Endothelial cell of umbilical vein (primary cell): ENCODE measurements at regions of chr7 and their contacts with region 1.

Region 1: DNA sequence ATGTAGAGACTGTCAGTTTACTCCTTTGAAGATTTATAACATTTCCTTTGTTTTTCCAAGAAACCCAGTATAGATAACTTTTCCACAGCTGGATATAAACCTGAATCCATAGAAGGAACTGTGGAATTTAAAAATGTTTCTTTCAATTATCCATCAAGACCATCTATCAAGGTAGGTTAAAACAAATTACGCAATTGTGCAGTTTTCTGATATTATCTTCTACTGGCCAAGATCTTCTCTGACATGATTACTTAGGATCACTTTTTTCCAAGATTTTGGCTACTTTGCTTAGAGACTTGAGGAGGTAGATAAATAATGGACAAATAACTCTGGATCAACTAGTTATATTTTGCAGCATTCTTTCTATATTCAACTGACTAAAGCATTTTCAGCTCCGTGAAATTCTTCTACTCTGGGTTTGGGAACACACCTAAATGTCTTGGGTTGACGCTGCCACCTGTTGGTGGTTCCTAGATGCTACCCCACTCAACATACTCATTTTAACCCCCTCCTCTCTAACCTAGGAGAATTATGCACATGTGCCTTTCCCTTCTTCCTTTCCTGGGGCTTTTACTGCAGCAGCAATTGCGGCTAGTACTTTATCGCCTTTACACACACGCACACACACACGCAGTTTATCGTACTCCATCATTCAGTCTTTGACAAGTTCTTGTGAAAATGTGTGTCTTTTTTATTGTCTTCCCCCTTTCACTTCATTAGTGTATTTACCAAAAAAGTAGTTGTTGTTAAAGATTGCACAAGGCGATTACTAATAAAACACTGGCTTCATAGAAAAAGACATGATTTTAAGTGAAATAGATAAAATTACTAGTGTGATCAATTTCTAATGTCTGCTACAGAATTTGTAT is 32.7 kb downstream of the ABCB5 start:
- DNase-seq: peak; percentile 64
- H3K4me3 ChIP-seq: no peak overlapping the region
- H3K27ac ChIP-seq: no peak overlapping the region
- H3K4me1 ChIP-seq: no peaks in the 10 kb centered on the region
- H3K27me3 ChIP-seq: peaks cover 0 to 4% of the 10 kb centered on the region in 2 experiments
- CTCF ChIP-seq: peak; percentile 54 to 64
- POLR2A ChIP-seq: no peak

Region 2: GRCh38 chr7:19708397-19709248 is 939.5 kb before region 1 on chr7 and contains the start of gene POLR1F:
- CTCF ChIA-PET with region 1: interaction called, 341 read pairs
- POLR2A ChIA-PET with region 1: no interaction called
- dilution Hi-C with region 1: no loop called
- intact Hi-C with region 1: loop called (anchors 1 kb)
- DNase-seq: peak; percentile 97
- H3K4me3 ChIP-seq: peak within 1 kb of the TSS; percentile 45 to 83 (median 77)
- H3K27ac ChIP-seq: peak within 1 kb of the TSS; percentile 44
- H3K4me1 ChIP-seq: peaks cover 19% of the 10 kb centered on the region
- H3K27me3 ChIP-seq: peaks cover 0 to 12% of the 10 kb centered on the region in 2 experiments
- CTCF ChIP-seq: peak; percentile 88 to 92
- POLR2A ChIP-seq: peak; percentile 92
- total RNA-seq, gene POLR1F: 21.0 and 27.0 TPM in 2 replicates

Region 3: DNA sequence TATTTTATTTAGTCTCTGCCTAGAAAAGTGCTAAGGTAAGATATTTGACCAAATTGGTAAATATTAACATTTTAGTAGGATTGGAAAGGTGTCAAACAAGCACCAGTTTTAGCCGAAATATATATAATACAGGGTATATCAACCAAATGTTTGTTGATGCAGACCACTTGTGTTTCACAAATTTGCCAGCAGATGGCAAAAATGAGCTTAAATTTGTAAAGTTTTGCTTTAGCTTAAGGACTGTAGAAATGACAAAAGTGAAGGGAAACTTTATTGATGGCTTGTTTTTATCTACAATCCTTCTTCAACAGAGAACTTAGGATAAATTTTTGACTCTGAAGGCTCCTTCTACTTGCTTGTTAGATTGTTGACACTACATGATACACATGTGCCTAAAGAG is 934.5 kb before region 1 on chr7:
- CTCF ChIA-PET with region 1: interaction called, 341 read pairs
- POLR2A ChIA-PET with region 1: no interaction called
- dilution Hi-C with region 1: no loop called
- intact Hi-C with region 1: loop called (anchors 1 kb)
- DNase-seq: peak; percentile 62
- H3K4me3 ChIP-seq: no peak overlapping the region
- H3K27ac ChIP-seq: no peak overlapping the region
- H3K4me1 ChIP-seq: no peaks in the 10 kb centered on the region
- H3K27me3 ChIP-seq: peaks cover 10 to 29% of the 10 kb centered on the region in 2 experiments
- CTCF ChIP-seq: peak; percentile 20 to 39
- POLR2A ChIP-seq: no peak

Region 4: GRCh38 chr7:19754521-19755116 is 893.5 kb before region 1 on chr7:
- CTCF ChIA-PET with region 1: interaction called, 26 read pairs
- POLR2A ChIA-PET with region 1: no interaction called
- dilution Hi-C with region 1: no loop called
- intact Hi-C with region 1: no loop called
- DNase-seq: peak; percentile 75
- H3K4me3 ChIP-seq: no peak overlapping the region
- H3K27ac ChIP-seq: no peak overlapping the region
- H3K4me1 ChIP-seq: no peaks in the 10 kb centered on the region
- H3K27me3 ChIP-seq: no peaks in the 10 kb centered on the region
- CTCF ChIP-seq: peak; percentile 36 to 43
- POLR2A ChIP-seq: no peak

Region 5: GRCh38 chr7:19982841-19983835 is 665.0 kb before region 1 on chr7:
- CTCF ChIA-PET with region 1: interaction called, 26 read pairs
- POLR2A ChIA-PET with region 1: no interaction called
- dilution Hi-C with region 1: no loop called
- intact Hi-C with region 1: loop called (anchors 2 kb)
- DNase-seq: peak; percentile 58
- H3K4me3 ChIP-seq: no peak overlapping the region
- H3K27ac ChIP-seq: no peak overlapping the region
- H3K4me1 ChIP-seq: no peaks in the 10 kb centered on the region
- H3K27me3 ChIP-seq: no peaks in the 10 kb centered on the region
- CTCF ChIP-seq: peak in 1 of 2 donors; percentile 31
- POLR2A ChIP-seq: no peak

Region 6: DNA sequence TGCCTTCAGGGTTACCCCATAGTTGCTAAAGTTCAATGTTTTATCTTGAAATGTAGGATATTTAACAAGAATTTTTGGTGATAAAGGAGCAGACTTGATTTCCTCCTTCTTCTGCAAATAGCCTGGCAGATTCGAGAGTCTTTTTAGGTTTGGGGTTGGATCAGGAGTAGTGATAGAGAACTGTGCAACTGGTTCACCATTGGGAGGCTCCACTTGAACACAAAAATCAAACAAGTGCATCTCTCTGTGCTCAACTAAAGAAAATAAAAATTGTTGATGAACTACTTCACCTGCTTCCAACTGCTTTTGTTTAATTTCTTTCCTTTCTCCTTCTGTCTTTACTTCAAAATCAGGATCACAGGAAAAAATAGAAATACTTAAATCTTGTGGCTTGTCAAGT is 489.5 kb before region 1 on chr7:
- CTCF ChIA-PET with region 1: interaction called, 4 read pairs
- POLR2A ChIA-PET with region 1: no interaction called
- dilution Hi-C with region 1: no loop called
- intact Hi-C with region 1: loop called (anchors 5 kb)
- DNase-seq: peak; percentile 39
- H3K4me3 ChIP-seq: no peak overlapping the region
- H3K27ac ChIP-seq: no peak overlapping the region
- H3K4me1 ChIP-seq: no peaks in the 10 kb centered on the region
- H3K27me3 ChIP-seq: no peaks in the 10 kb centered on the region
- CTCF ChIP-seq: peak in 1 of 2 donors; percentile 18
- POLR2A ChIP-seq: no peak

Region 7: DNA sequence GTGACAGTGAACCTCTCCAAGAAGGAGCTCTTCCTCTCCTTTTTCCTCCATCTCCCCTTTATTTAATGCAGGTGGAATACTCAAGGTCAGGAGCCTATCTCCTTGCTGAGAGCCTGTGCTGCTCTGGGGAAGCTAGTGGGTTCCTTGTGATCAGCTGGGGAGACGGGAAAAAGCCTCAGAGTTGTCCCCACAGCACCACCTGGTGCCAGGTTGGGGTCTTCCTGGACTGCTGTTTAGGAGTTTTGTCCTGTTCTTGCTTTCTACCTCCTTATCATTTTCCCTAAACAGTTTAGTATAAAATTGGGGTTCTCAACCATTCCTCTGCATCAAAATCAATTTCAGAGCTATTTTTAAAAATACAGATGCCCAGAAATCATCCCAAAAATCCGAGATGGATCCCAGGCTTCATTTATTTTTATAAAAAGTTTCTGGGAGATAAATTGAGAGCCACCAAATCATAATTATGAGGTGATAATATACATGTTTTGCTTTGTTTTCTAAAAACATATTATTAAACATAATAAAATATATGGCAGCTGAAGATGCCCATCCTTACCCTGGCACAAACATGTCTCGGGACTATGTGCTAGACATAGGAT is 475.3 kb before region 1 on chr7:
- CTCF ChIA-PET with region 1: no interaction called
- POLR2A ChIA-PET with region 1: no interaction called
- dilution Hi-C with region 1: no loop called
- intact Hi-C with region 1: loop called (anchors 5 kb)
- DNase-seq: peak; percentile 51
- H3K4me3 ChIP-seq: no peak overlapping the region
- H3K27ac ChIP-seq: no peak overlapping the region
- H3K4me1 ChIP-seq: no peaks in the 10 kb centered on the region
- H3K27me3 ChIP-seq: no peaks in the 10 kb centered on the region
- CTCF ChIP-seq: peak; percentile 55 to 66
- POLR2A ChIP-seq: no peak